Left colon (tissue), 2 donors: ENCODE measurements at regions of chr10 and their contacts with region 1.

Region 1: GRCh38 chr10:122565728-122566206 is 5.2 kb downstream of the DMBT1 start:
- DNase-seq: peak; percentile 51 to 84
- ATAC-seq: peak; percentile 70

Region 2: GRCh38 chr10:122298598-122299301 is 267.0 kb before region 1 on chr10:
- intact Hi-C with region 1: loop called in 1 of 2 experiments (anchors 10 kb)
- DNase-seq: peak; percentile 48 to 76
- ATAC-seq: peak; percentile 94

Region 3: DNA sequence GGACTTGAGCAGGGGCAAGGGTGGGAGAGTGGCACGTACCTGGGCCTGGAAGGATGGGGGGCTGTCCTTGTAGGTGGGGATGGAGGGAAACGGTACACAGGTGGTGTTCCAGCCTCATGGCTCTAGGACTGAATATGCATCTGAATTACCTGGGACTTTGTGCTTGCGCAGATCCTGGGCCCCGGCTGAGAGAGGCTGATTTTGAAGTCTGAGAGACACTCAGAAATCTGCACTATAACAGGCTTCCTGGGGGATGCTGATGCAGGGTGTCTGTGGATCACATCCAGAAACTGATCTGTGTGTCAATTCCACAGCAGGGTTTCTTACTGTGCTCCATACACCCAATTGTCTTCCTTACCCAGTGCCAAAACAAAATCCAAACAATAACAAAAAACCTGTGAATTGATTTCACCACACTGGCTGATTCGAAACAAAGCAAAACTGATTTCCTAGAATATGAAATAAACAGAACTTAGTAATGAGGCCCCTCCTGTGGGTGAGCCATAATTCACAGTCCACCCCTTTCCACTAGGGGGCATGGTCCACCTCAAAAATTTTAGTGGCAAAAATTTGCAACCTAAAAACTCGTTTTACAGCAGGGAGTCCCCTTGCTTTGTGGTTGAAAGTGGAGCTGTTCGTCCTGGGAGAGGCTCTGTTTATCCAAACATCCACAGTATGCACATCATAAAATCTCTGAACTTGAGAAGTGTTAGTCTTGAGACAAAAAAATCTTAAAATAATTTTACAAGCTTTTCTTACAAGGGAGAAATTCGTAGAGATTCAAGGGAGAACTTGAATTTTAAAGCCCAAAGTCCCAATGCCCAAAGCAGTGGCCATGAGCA is 223.3 kb before region 1 on chr10:
- intact Hi-C with region 1: loop called in 1 of 2 experiments (anchors 10 kb)
- DNase-seq: peak in 1 of 2 donors; percentile 38
- ATAC-seq: no peak

Region 4: GRCh38 chr10:122435212-122435827 is 130.4 kb before region 1 on chr10:
- intact Hi-C with region 1: loop called in 1 of 2 experiments (anchors 10 kb)
- DNase-seq: no peak
- ATAC-seq: peak; percentile 45

Region 5: GRCh38 chr10:123093489-123094231 is 527.9 kb after region 1 on chr10:
- intact Hi-C with region 1: no loop called
- DNase-seq: no peak
- ATAC-seq: no peak